ENCODE measurements at regions of chr6 and their contacts with region 1.

Region 1: DNA sequence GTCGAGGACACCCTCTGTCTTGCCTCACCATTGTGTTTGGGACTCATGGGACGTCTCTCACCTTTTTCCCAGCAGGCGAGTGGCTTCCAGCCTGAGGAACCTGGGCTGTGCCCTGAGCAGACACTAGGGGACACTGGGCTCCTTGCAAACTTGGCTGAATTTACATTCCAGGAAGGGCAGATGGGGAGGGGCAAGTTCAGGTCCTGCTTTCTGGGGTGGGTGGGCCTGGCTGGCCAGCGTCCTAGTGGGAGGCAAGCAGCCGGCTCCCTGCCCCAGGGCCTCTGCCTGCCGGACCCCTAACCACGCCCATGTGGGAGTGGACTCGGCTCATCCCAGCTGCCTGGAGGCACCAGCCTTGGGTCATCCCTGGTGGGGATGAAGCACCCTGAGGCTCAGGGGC is 48.2 kb upstream of the MLN start:
- DNase-seq: peak; percentile 60 to 68
- H3K4me3 ChIP-seq: no peak overlapping the region
- H3K4me3 Mint-ChIP-seq: no peak overlapping the region
- H3K27ac Mint-ChIP-seq: no peak overlapping the region
- H3K4me1 ChIP-seq: peaks cover 30% of the 10 kb centered on the region
- H3K4me1 Mint-ChIP-seq: peaks cover 8% of the 10 kb centered on the region
- H3K27me3 ChIP-seq: no peaks in the 10 kb centered on the region; the same call in 1 of the 2 replicates
- H3K27me3 Mint-ChIP-seq: no peaks in the 10 kb centered on the region
- CTCF ChIP-seq: peak; percentile 36 to 88

Region 2: DNA sequence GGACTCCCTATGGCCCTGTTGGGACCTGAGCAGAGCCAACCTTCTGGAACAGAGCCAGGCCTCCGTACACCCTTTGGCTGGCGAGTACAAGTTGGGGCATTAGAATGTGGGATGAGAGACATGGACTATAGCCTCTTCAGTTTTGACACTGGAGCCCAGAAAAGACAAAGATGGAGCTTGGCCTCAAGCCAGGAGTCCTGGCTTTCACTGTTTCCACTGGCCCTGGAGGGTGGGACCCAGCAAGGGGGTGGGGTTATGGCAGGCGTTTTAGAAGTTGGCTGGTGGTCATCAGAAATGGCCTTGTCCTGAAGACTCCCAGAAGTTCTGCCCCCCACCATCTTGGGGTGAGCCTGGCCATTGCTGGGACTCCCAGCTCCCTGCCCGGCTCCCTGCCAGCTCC is 209.1 kb before region 1 on chr6:
- CTCF ChIA-PET with region 1: no interaction called
- POLR2A ChIA-PET with region 1: no interaction called
- intact Hi-C with region 1: no loop called
- DNase-seq: no peak
- H3K4me3 ChIP-seq: no peak overlapping the region
- H3K4me3 Mint-ChIP-seq: no peak overlapping the region
- H3K27ac Mint-ChIP-seq: no peak overlapping the region
- H3K4me1 ChIP-seq: peaks cover 12% of the 10 kb centered on the region
- H3K4me1 Mint-ChIP-seq: peaks cover 9% of the 10 kb centered on the region
- H3K27me3 ChIP-seq: no peaks in the 10 kb centered on the region
- H3K27me3 Mint-ChIP-seq: no peaks in the 10 kb centered on the region
- CTCF ChIP-seq: no peak

Region 3: GRCh38 chr6:33894438-33894837 is 42.5 kb after region 1 on chr6:
- CTCF ChIA-PET with region 1: no interaction called
- POLR2A ChIA-PET with region 1: no interaction called
- intact Hi-C with region 1: loop called (anchors 5 kb)
- DNase-seq: no peak
- H3K4me3 ChIP-seq: no peak overlapping the region
- H3K4me3 Mint-ChIP-seq: no peak overlapping the region
- H3K27ac Mint-ChIP-seq: no peak overlapping the region
- H3K4me1 ChIP-seq: peaks cover 16% of the 10 kb centered on the region; the same call in 1 of the 2 replicates
- H3K4me1 Mint-ChIP-seq: peaks cover 13% of the 10 kb centered on the region
- H3K27me3 ChIP-seq: no peaks in the 10 kb centered on the region
- H3K27me3 Mint-ChIP-seq: no peaks in the 10 kb centered on the region
- CTCF ChIP-seq: no peak

Region 4: GRCh38 chr6:34036357-34037069 is 184.6 kb after region 1 on chr6:
- CTCF ChIA-PET with region 1: no interaction called
- POLR2A ChIA-PET with region 1: no interaction called
- intact Hi-C with region 1: no loop called
- DNase-seq: no peak
- H3K4me3 ChIP-seq: no peak overlapping the region
- H3K4me3 Mint-ChIP-seq: no peak overlapping the region
- H3K27ac Mint-ChIP-seq: no peak overlapping the region
- H3K4me1 ChIP-seq: no peaks in the 10 kb centered on the region
- H3K4me1 Mint-ChIP-seq: no peaks in the 10 kb centered on the region
- H3K27me3 ChIP-seq: no peaks in the 10 kb centered on the region
- H3K27me3 Mint-ChIP-seq: peaks cover 17% of the 10 kb centered on the region
- CTCF ChIP-seq: no peak